HCT116 (cell line): ENCODE measurements at regions of chr14 and their contacts with region 1.

Region 1: DNA sequence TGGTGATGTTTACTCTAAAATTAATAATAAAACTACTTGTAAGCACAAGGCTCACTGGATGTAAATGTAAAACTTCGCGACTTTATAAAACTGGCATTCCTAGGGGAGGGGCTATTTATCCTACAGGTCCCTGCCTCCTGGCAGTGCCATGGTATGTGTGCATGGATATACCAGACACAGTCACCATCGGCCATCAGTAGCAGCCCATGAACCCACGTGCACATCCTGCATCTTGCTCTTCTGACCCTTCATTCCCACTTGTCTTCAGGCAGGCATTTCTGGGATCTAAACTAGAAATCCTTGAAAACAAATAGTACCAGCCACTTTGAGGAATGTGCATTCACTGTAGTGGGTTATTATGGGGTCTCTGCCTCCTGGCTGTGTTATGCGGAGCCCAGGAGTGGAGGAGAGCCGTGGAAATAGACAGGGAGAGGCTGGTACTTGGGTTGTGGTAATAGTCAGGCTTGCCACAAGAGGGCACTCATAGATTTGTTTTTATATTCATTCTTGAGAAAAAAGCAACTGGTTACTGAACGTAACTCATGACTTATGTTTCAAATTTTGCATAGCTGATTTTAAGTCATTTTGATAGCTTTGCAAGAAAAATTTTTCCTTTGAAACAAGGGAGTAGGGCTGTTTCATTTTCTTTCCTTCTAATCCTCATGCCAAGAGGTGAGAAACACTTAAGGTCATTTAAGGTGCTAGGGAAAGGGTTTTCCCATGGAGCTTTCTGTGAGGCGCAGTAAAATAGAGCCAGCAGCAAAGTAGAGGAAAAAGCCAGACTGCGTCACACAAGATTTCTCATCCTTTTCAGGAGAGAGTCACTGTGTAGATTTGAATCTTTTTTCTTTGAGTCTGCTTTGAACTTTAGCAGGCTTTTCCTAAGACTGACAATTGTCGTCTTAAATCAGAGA is 17.4 kb upstream of the GALNT16 start:
- DNase-seq: peak; percentile 39
- ATAC-seq: peak; percentile 85
- H3K4me3 ChIP-seq: no peak overlapping the region
- H3K27ac ChIP-seq: no peak overlapping the region
- H3K4me1 ChIP-seq: no peaks in the 10 kb centered on the region
- H3K27me3 ChIP-seq: no peaks in the 10 kb centered on the region
- CTCF ChIP-seq: peak; percentile 54 to 77 (median 61); a peak in 5 of 6 replicates
- POLR2A ChIP-seq: no peak
- RAD21 ChIP-seq: peak; percentile 72

Region 2: GRCh38 chr14:68862954-68863594 is 379.5 kb before region 1 on chr14:
- CTCF ChIA-PET with region 1: interaction called, 3 read pairs
- POLR2A ChIA-PET with region 1: no interaction called
- RAD21 ChIA-PET with region 1: no interaction called
- intact Hi-C with region 1: loop called (anchors 2 kb)
- DNase-seq: peak; percentile 67
- ATAC-seq: peak; percentile 96
- H3K4me3 ChIP-seq: no peak overlapping the region
- H3K27ac ChIP-seq: no peak overlapping the region
- H3K4me1 ChIP-seq: peaks cover 0 to 4% of the 10 kb centered on the region in 2 experiments; a peak in 2 of 4 replicates
- H3K27me3 ChIP-seq: no peaks in the 10 kb centered on the region
- CTCF ChIP-seq: peak; percentile 78 to 86 (median 85)
- POLR2A ChIP-seq: no peak
- RAD21 ChIP-seq: peak; percentile 93

Region 3: DNA sequence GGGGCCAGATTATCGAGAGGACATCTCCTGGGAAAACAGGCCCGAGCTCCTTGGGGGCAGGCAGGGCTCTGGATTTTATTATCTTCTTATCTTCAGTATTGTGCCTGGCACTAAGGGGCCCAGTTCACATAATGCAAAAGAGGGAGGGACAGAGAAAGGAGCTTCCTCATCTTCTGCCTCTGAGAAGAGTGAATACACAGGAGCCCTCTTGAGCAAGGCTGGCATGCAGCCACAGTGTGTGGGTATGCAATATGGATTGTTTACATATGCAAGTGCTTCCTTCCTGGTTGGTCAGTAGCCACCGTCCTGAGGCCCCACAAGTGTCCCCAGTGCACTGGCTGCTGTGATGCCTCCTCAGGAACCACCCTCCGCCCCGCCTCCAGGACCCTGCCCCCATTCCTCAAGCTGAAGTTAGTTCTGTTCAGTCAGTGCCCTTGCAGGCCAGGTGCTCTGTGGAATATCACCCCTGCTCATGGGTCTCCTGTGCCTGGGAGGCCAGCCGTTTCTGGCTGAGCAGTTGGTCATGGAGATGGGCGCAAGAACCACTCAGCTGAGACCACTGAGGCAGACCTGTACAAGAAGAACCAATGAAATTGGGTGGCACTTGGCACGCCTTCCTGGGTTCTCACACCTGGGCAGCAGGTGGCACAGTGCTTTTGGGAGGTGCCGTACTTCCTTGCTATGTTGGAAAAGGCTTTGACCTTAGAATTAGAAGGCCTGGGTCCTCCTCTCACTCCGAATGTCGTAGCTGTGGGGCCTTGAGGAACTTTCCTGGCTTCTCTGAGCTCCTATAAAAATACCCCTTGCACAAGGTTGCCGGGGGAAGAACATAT is 228.4 kb before region 1 on chr14:
- CTCF ChIA-PET with region 1: no interaction called
- POLR2A ChIA-PET with region 1: no interaction called
- RAD21 ChIA-PET with region 1: no interaction called
- intact Hi-C with region 1: no loop called
- DNase-seq: no peak
- ATAC-seq: peak; percentile 30; the same call in 1 of the 2 replicates
- H3K4me3 ChIP-seq: no peak overlapping the region
- H3K27ac ChIP-seq: no peak overlapping the region
- H3K4me1 ChIP-seq: peaks cover 10% of the 10 kb centered on the region in 2 experiments; a peak in 3 of 4 replicates
- H3K27me3 ChIP-seq: no peaks in the 10 kb centered on the region
- CTCF ChIP-seq: no peak
- POLR2A ChIP-seq: no peak
- RAD21 ChIP-seq: no peak

Region 4: DNA sequence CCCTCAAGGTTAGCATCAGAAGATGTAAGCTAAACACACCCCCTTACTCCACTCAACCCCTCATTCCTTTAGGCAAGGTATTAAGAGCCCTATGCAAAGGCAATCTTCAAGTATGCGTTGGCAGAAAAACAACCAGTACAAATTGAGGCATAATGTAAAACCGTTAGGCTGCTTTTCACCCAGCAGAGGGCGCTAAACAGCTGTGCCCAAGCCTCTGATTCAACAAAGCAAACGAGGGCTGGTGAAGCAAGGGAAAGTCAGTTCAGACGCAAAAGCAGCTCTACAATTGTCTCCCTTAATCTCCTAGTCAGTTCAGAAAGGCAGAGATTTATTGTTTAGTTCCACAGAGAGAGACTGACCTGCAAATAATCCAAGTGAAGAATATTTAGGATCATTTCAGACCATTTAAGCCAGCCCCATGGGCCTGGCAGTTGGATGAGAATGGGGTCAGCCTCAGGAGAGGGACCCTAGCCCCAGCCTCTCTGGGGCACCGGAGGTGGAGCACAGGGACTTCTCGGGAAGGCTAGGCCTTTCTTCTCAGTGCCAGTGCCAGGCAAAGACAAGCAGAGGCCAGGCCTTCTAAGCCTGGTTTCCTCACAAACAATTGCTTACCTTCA is 113.2 kb before region 1 on chr14:
- CTCF ChIA-PET with region 1: interaction called, 5 read pairs
- POLR2A ChIA-PET with region 1: no interaction called
- RAD21 ChIA-PET with region 1: no interaction called
- intact Hi-C with region 1: loop called (anchors 5 kb)
- DNase-seq: peak; percentile 52
- ATAC-seq: peak; percentile 96
- H3K4me3 ChIP-seq: no peak overlapping the region
- H3K27ac ChIP-seq: no peak overlapping the region
- H3K4me1 ChIP-seq: peaks cover 0 to 12% of the 10 kb centered on the region in 2 experiments; a peak in 2 of 4 replicates
- H3K27me3 ChIP-seq: no peaks in the 10 kb centered on the region
- CTCF ChIP-seq: peak; percentile 73 to 98 (median 93); a peak in 5 of 6 replicates
- POLR2A ChIP-seq: no peak
- RAD21 ChIP-seq: peak; percentile 84

Region 5: DNA sequence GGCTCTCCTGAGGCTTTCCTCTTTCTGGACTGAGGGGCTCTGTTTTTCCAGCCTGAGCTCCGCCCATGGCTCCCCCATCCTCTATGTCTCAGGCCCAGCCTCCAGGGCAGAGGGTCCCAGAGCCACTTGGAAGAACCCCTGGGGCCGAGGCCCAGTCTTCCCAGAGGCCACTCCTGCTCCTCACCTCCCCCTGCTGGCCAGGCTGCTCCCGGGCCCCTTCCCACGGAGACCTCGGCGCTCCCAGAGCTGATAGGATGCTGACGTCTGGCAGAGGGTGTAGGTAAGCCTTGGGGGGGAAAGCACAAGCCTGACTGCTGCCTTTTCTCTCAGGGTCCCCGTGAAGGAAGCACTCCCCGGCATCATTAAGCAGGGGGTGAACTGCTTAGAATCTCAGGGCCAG is 104.1 kb after region 1 on chr14:
- CTCF ChIA-PET with region 1: no interaction called
- POLR2A ChIA-PET with region 1: no interaction called
- RAD21 ChIA-PET with region 1: no interaction called
- intact Hi-C with region 1: loop called (anchors 2 kb)
- DNase-seq: no peak
- ATAC-seq: peak; percentile 92
- H3K4me3 ChIP-seq: no peak overlapping the region
- H3K27ac ChIP-seq: no peak overlapping the region
- H3K4me1 ChIP-seq: no peaks in the 10 kb centered on the region
- H3K27me3 ChIP-seq: no peaks in the 10 kb centered on the region
- CTCF ChIP-seq: peak; percentile 58 to 90 (median 74); a peak in 5 of 6 replicates
- POLR2A ChIP-seq: no peak
- RAD21 ChIP-seq: peak; percentile 57

Region 6: GRCh38 chr14:69460093-69460701 is 217.6 kb after region 1 on chr14:
- CTCF ChIA-PET with region 1: interaction called, 30 read pairs
- POLR2A ChIA-PET with region 1: no interaction called
- RAD21 ChIA-PET with region 1: no interaction called
- intact Hi-C with region 1: loop called (anchors 1 kb)
- DNase-seq: peak; percentile 63
- ATAC-seq: peak; percentile 97
- H3K4me3 ChIP-seq: no peak overlapping the region
- H3K27ac ChIP-seq: no peak overlapping the region
- H3K4me1 ChIP-seq: no peaks in the 10 kb centered on the region
- H3K27me3 ChIP-seq: no peaks in the 10 kb centered on the region
- CTCF ChIP-seq: peak; percentile 68 to 82 (median 80); a peak in 5 of 6 replicates
- POLR2A ChIP-seq: no peak
- RAD21 ChIP-seq: peak; percentile 79

Region 7: DNA sequence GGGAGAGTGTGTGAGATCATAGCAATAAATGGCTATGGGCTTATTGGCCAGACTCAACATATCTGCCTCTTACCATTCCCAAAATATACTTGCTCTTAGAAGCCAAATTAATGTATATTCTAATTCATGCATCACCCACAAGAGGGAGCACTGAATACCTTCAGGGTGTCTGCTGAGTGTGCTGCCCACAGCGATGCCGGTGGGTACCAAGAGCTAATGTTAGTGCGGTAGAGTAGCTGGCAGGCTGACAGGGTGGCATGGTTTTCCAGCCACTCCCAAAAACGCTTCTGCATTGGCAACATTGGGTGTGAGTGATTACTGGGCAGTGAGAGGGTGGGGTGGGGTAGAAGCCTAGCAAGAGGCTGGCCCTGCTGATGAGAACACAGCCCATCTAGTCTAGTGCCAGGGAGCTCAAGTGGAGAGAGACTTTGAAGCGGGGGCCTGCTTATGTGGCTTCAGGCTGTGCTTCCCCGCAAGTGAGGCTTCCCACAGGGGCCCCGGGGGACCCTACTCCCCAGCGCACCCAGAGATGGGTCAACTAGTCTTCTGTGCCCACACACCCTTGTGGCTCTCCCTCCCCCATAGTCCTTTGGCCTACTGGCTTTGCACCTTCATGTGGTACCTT is 232.7 kb after region 1 on chr14:
- CTCF ChIA-PET with region 1: interaction called, 3 read pairs
- POLR2A ChIA-PET with region 1: no interaction called
- RAD21 ChIA-PET with region 1: no interaction called
- intact Hi-C with region 1: loop called (anchors 5 kb)
- DNase-seq: no peak
- ATAC-seq: peak; percentile 84
- H3K4me3 ChIP-seq: no peak overlapping the region
- H3K27ac ChIP-seq: no peak overlapping the region
- H3K4me1 ChIP-seq: peaks cover 0 to 7% of the 10 kb centered on the region in 2 experiments; a peak in 1 of 4 replicates
- H3K27me3 ChIP-seq: no peaks in the 10 kb centered on the region
- CTCF ChIP-seq: peak in 2 of 3 experiments; percentile 58 to 62; a peak in 4 of 6 replicates
- POLR2A ChIP-seq: no peak
- RAD21 ChIP-seq: no peak

Region 8: GRCh38 chr14:69574263-69574953 is 331.8 kb after region 1 on chr14 and contains the start of gene CCDC177:
- CTCF ChIA-PET with region 1: interaction called, 4 read pairs
- POLR2A ChIA-PET with region 1: no interaction called
- RAD21 ChIA-PET with region 1: no interaction called
- intact Hi-C with region 1: loop called (anchors 2 kb)
- DNase-seq: peak; percentile 21
- ATAC-seq: peak; percentile 91
- H3K4me3 ChIP-seq: peak within 1 kb of the TSS; percentile 19 to 44
- H3K27ac ChIP-seq: no peak within 1 kb of the TSS
- H3K4me1 ChIP-seq: peaks cover 0 to 4% of the 10 kb centered on the region in 2 experiments; a peak in 1 of 4 replicates
- H3K27me3 ChIP-seq: no peaks in the 10 kb centered on the region
- CTCF ChIP-seq: peak; percentile 77 to 97 (median 85)
- POLR2A ChIP-seq: no peak
- RAD21 ChIP-seq: peak; percentile 74
- total RNA-seq, gene CCDC177: not detected

Region 9: DNA sequence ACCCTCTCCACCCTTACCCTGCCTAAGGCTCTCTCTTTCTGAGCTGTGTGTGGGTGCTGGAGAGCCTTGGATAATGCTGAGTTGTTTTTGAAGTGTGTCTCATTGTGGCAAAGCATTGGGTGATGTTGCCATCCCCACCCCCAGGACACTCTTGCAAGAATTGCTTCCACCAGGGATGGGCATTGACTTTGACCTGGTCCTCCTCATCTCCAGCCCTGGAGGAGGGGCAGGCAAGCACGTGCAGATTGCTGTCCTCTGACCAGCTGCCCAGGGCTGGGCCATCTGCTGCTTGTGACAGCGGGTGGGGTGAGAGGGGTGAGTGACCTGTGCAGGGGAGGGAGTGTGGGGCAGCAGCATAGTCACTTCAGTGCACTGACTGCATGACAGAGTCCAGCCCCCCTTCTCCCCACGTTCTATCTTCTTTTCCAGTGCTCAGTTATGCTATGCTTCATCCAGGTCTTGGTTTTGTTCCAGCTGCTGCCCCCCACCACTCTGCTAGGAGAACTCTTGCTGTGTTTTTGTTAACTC is 395.0 kb after region 1 on chr14:
- CTCF ChIA-PET with region 1: no interaction called
- POLR2A ChIA-PET with region 1: no interaction called
- RAD21 ChIA-PET with region 1: no interaction called
- intact Hi-C with region 1: no loop called
- DNase-seq: no peak
- ATAC-seq: no peak
- H3K4me3 ChIP-seq: no peak overlapping the region
- H3K27ac ChIP-seq: no peak overlapping the region
- H3K4me1 ChIP-seq: no peaks in the 10 kb centered on the region
- H3K27me3 ChIP-seq: no peaks in the 10 kb centered on the region
- CTCF ChIP-seq: no peak
- POLR2A ChIP-seq: no peak
- RAD21 ChIP-seq: no peak